HEK293 (cell line): ENCODE measurements at regions of chr5 and their contacts with region 1.

Region 1: GRCh38 chr5:14142827-14143548 is at the start of gene TRIO:
- H3K4me3 ChIP-seq: peak within 1 kb of the TSS; percentile 69
- H3K27ac ChIP-seq: peak within 1 kb of the TSS; percentile 98
- H3K4me1 ChIP-seq: peaks cover 44% of the 10 kb centered on the region
- CTCF ChIP-seq: peak; percentile 89

Region 2: GRCh38 chr5:14086261-14086660 is 56.7 kb before region 1 on chr5:
- CTCF ChIA-PET with region 1: no interaction called
- POLR2A ChIA-PET with region 1: no interaction called
- H3K4me3 ChIP-seq: no peak overlapping the region
- H3K27ac ChIP-seq: no peak overlapping the region
- H3K4me1 ChIP-seq: no peaks in the 10 kb centered on the region
- CTCF ChIP-seq: no peak

Region 3: GRCh38 chr5:14131855-14132503 is 11.0 kb before region 1 on chr5:
- CTCF ChIA-PET with region 1: interaction called, 6 read pairs
- POLR2A ChIA-PET with region 1: interaction called, 13 read pairs
- H3K4me3 ChIP-seq: no peak overlapping the region
- H3K27ac ChIP-seq: peak overlapping the region; percentile 81
- H3K4me1 ChIP-seq: peaks cover 20% of the 10 kb centered on the region
- CTCF ChIP-seq: peak; percentile 57; the same call in 1 of the 2 replicates

Region 4: GRCh38 chr5:14156650-14157493 is 13.9 kb after region 1 on chr5:
- CTCF ChIA-PET with region 1: interaction called, 5 read pairs
- POLR2A ChIA-PET with region 1: interaction called, 28 read pairs
- H3K4me3 ChIP-seq: peak overlapping the region; percentile 32
- H3K27ac ChIP-seq: peak overlapping the region; percentile 97
- H3K4me1 ChIP-seq: peaks cover 69% of the 10 kb centered on the region
- CTCF ChIP-seq: no peak